Panc1 (cell line): ENCODE measurements at regions of chr15 and their contacts with region 1.

Region 1: DNA sequence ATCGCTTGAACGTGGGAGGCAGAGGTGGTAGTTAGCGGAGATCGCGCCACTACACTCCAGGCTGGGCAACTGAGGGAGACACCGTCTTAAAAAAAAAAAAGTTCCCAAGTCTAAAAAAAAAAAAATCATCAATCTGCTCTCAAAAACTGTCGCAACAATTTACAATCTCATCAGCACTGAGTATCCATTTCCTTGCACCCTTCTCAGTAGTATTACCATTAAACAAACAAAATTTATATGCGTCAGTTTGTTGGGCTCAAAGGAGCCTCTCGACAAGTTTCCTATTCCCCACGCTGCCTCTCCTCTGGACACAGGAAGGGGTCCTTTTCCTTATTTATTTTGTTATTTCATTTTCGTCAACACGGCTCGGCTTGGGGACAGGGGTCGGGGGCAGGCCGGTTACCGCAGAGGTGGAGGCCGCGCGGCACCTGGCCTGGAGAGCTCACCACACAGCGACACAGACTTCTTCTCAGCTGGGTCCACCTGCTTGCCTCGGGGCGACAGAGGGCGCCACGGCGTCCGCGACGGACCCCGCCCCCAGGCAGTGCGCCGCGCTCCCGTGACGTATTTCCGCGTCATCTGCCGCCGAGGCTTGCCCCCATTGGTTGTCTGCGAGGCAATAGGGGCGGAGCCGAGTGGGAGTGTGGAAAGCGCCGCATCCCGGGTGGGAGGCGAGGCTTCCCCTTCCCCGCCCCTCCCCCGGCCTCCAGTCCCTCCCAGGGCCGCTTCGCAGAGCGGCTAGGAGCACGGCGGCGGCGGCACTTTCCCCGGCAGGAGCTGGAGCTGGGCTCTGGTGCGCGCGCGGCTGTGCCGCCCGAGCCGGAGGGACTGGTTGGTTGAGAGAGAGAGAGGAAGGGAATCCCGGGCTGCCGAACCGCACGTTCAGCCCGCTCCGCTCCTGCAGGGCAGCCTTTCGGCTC is at the start of gene MAP2K1:
- DNase-seq: peak; percentile 79
- ATAC-seq: peak; percentile 96
- H3K4me3 ChIP-seq: peak within 1 kb of the TSS; percentile 76 to 82
- H3K27ac ChIP-seq: peak within 1 kb of the TSS; percentile 80
- H3K4me1 ChIP-seq: peaks cover 15% of the 10 kb centered on the region
- H3K27me3 ChIP-seq: no peaks in the 10 kb centered on the region
- CTCF ChIP-seq: peak; percentile 89
- total RNA-seq, gene MAP2K1: 67.9 TPM

Region 2: GRCh38 chr15:66497502-66498455 is 111.3 kb after region 1 on chr15 and contains the start of gene SNAPC5:
- CTCF ChIA-PET with region 1: interaction called, 4 read pairs
- POLR2A ChIA-PET with region 1: interaction called, 3 read pairs
- in situ Hi-C with region 1: no loop called
- intact Hi-C with region 1: loop called (anchors 5 kb)
- DNase-seq: peak; percentile 87
- ATAC-seq: peak; percentile 92
- H3K4me3 ChIP-seq: peak within 1 kb of the TSS; percentile 76 to 99
- H3K27ac ChIP-seq: peak within 1 kb of the TSS; percentile 93
- H3K4me1 ChIP-seq: peaks cover 47% of the 10 kb centered on the region
- H3K27me3 ChIP-seq: no peaks in the 10 kb centered on the region
- CTCF ChIP-seq: peak; percentile 99
- total RNA-seq, gene SNAPC5: 36.4 TPM